GM13976 (cell line): ENCODE measurements at regions of chr6 and their contacts with region 1.

Region 1: DNA sequence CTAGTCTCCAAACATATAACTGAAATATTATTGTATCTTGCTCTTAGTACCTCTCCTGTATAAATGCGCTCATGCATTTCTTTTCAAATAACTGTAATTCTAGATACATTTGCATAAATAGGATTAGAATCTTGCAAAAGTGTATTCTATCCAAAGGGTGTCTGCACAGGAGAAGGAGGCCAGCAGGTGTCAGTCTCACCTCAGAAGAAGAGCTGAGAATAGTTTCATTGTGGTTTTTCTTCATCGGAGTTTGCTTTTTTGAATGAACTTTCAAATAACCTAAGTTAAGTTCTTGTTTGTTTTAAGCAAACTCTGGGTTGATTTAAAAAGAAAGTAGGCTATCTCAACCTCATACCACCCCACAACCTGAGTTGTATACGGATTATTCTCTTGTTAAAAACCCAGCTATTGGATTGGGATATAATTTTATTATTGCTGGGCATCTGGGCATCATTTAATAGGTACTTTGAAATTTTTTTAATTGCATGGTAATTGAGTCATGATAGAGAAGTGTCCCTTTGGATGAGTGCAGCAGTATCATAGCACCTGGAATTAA is 125.0 kb upstream of the MLIP start:
- DNase-seq: peak; percentile 18
- CTCF ChIP-seq: peak; percentile 57

Region 2: GRCh38 chr6:53691667-53692133 is 294.5 kb before region 1 on chr6:
- in situ Hi-C with region 1: no loop called
- DNase-seq: no peak
- CTCF ChIP-seq: no peak

Region 3: GRCh38 chr6:54244430-54244829 is 258.2 kb after region 1 on chr6:
- in situ Hi-C with region 1: loop called (anchors 25 kb)
- DNase-seq: no peak
- CTCF ChIP-seq: no peak

Region 4: DNA sequence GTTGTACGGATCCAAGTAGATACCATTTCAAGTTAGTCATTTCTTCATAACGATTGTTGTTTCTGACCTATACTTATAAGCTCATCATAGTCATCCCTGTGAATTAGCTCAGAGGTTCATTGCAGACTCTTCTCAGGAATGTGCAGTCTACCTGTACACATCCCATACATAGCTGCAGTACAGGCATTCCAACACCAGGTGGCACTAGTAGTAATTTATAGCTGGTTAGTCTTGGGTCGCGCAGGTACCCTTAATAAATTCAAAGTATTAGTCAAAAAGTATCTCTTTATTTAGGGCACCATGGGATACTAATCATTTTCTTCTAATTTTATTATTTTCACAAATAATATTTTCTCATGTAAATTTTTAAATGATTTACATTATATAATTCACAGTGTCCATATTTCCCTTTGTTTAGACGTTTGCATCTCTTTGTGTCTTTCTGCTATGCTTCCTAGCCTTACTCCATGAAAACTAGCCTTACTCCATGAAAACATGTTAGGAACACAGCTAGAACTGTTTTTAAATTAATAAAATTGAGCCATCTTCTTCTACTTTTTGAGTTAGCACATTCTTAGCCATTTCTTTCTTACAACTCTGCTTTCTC is 731.7 kb after region 1 on chr6:
- in situ Hi-C with region 1: loop called (anchors 25 kb)
- DNase-seq: peak; percentile 40
- CTCF ChIP-seq: peak; percentile 85

Region 5: DNA sequence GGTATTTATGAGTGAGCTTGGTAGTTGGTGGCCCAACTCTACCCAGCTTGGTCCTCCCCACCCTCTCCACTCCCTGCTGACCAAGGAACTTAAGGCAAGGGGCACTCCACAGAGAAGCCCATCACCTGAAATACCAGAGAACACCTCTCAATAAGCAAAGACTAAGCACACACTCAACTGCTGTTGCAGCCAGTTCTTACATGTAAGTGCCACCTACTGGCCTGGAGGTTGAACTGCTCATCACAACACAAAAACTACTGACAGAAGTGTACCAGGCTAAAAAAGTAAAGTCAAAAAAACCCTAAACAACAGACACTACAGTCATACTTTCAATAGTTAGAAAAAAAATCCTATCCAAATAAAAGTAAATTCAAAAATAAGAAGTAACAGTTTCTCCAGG is 1006.5 kb after region 1 on chr6:
- in situ Hi-C with region 1: loop called (anchors 25 kb)
- DNase-seq: no peak
- CTCF ChIP-seq: no peak

Region 6: GRCh38 chr6:55069132-55069781 is 1083.0 kb after region 1 on chr6:
- in situ Hi-C with region 1: loop called (anchors 25 kb)
- DNase-seq: no peak
- CTCF ChIP-seq: peak; percentile 53